PC-9 (cell line): ENCODE measurements at regions of chr16 and their contacts with region 1.

Region 1: DNA sequence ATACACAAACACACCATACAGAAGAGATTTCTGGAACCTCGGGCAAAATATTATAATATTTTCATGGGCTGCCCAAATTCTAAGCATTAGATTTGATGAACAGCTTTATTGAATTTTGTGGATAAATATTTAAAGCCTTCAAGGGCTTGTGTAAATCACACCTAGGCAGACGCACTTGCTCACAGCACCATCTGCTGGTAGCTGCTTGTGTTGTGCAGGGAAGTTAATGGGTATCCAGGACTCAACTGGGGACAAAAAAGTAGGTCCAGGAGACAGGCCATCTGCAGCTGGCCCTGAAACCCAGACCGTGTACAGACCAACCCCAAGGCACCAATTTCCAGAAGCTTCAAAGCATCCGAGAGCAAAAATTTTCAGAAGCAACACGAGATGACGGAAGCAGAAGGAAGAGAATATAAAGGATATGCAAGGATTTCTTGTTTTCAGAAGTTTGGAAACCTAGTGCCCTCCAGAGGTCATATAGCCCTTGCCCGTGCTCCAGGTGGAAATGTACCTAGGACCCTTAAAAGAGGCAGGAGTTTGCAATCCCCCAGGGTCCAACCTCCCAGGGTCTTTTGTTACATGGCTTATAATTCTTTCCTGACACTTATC is 140.0 kb downstream of the CHD9NB start:
- DNase-seq: peak in 1 of 2 experiments; percentile 44
- H3K4me3 ChIP-seq: no peak overlapping the region
- H3K27ac ChIP-seq: no peak overlapping the region
- H3K4me1 ChIP-seq: no peaks in the 10 kb centered on the region
- H3K27me3 ChIP-seq: peaks cover 11% of the 10 kb centered on the region; the same call in 1 of the 2 replicates
- CTCF ChIP-seq: peak; percentile 81

Region 2: GRCh38 chr16:52191531-52192134 is 721.0 kb before region 1 on chr16:
- CTCF ChIA-PET with region 1: interaction called, 3 read pairs
- POLR2A ChIA-PET with region 1: no interaction called
- intact Hi-C with region 1: loop called (anchors 1 kb)
- DNase-seq: peak in 1 of 2 experiments; percentile 38
- H3K4me3 ChIP-seq: no peak overlapping the region
- H3K27ac ChIP-seq: no peak overlapping the region
- H3K4me1 ChIP-seq: no peaks in the 10 kb centered on the region
- H3K27me3 ChIP-seq: no peaks in the 10 kb centered on the region
- CTCF ChIP-seq: peak; percentile 88

Region 3: DNA sequence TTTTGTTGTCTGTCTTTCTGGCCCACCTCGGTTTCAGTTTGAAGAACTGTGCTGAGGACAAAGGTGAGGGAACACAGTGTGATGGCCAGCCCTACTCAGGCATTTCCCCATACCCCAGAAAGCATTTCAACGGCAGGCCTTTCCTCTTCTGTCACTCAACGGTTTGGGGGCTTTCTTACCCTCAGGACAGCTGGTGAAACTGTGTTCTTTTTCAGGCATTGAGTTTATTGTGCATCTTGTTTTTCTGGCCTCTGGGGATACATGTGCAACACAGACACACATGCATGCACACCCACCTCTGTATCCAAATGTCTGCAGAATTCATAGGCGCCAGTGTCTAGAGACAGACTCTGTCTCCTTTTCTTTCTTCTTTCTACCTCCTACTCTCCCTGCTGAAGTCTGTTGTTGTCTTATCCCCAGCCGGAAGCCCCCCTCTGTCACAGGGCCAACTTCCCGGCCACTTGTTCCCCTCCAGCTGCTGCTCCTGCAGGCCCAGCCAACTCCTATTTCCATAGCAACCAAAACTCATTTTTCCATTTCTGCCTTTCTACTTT is 159.2 kb after region 1 on chr16:
- CTCF ChIA-PET with region 1: no interaction called
- POLR2A ChIA-PET with region 1: no interaction called
- intact Hi-C with region 1: no loop called
- DNase-seq: no peak
- H3K4me3 ChIP-seq: no peak overlapping the region
- H3K27ac ChIP-seq: no peak overlapping the region
- H3K4me1 ChIP-seq: no peaks in the 10 kb centered on the region
- H3K27me3 ChIP-seq: no peaks in the 10 kb centered on the region
- CTCF ChIP-seq: no peak

Region 4: DNA sequence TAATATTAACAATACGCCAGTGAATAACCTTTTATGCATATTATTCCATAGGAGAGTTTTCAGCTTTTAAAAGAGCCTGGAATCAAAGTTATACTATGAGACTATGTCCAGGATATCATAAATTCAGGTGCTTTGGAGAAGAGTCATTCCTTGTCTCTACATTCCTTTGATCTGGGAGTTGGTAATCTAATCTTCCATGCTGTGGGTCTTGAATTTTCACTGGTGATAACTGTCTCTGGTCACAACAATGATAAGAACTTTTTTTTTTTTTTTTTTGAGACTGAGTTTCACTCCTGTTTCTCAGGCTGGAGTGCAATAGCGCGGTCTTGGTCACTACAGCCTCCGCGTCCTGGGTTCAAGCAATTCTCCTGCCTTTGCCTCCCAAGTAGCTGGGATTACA is 192.9 kb after region 1 on chr16:
- CTCF ChIA-PET with region 1: interaction called, 10 read pairs
- POLR2A ChIA-PET with region 1: no interaction called
- intact Hi-C with region 1: no loop called
- DNase-seq: no peak
- H3K4me3 ChIP-seq: no peak overlapping the region
- H3K27ac ChIP-seq: no peak overlapping the region
- H3K4me1 ChIP-seq: peaks cover 21% of the 10 kb centered on the region
- H3K27me3 ChIP-seq: no peaks in the 10 kb centered on the region
- CTCF ChIP-seq: no peak